Activated CD8-positive, alpha-beta memory T cell treated with anti-CD3 and anti-CD28 coated beads, Interleukin-2, amount 10 ng/mL, durations not matched to agents 7 days and 5 days (primary cell): ENCODE measurements at regions of chr6 and their contacts with region 1.

Region 1: GRCh38 chr6:44456070-44456965 is 68.8 kb downstream of the CDC5L start:
- DNase-seq: no peak
- ATAC-seq: peak; percentile 78
- H3K4me3 Mint-ChIP-seq: no peak overlapping the region
- H3K27ac Mint-ChIP-seq: no peak overlapping the region
- H3K4me1 Mint-ChIP-seq: peaks cover 6% of the 10 kb centered on the region
- H3K27me3 Mint-ChIP-seq: peaks cover 9% of the 10 kb centered on the region

Region 2: DNA sequence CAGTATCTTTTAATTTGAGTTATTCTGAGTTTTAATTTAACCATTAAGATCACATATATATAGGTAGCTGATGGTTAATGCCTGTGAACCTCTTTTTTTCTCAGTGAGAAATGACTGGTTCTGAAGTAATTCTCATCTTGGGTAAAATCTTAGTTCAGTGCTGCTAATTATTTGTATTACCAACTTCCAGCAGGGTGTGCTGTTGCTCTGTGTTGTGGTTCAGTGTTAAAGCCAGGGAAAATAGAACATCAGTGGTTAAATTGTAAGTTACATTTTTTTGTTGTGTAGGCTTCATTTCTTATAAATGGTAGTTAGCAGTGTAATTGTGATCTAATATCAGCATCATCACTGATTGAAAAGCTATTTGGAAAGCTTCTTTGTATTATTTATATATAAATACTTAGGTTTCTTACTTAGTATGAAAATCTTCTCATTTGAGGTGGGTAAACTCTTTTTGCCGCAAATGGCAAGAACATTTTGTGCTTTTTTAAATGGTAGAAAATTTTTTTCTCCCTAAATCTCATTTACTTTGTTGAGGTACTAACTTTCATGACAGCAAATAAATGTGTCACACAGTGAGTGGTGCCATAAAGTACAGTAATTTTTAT is 25.1 kb before region 1 on chr6:
- CTCF ChIA-PET with region 1: interaction called, 21 read pairs
- DNase-seq: peak; percentile 55
- ATAC-seq: peak; percentile 77
- H3K4me3 Mint-ChIP-seq: no peak overlapping the region
- H3K27ac Mint-ChIP-seq: no peak overlapping the region
- H3K4me1 Mint-ChIP-seq: peaks cover 3% of the 10 kb centered on the region
- H3K27me3 Mint-ChIP-seq: no peaks in the 10 kb centered on the region

Region 3: GRCh38 chr6:44489910-44490604 is 33.7 kb after region 1 on chr6:
- CTCF ChIA-PET with region 1: no interaction called
- DNase-seq: no peak
- ATAC-seq: no peak
- H3K4me3 Mint-ChIP-seq: no peak overlapping the region
- H3K27ac Mint-ChIP-seq: no peak overlapping the region
- H3K4me1 Mint-ChIP-seq: no peaks in the 10 kb centered on the region
- H3K27me3 Mint-ChIP-seq: peaks cover 29% of the 10 kb centered on the region